HCT116 (cell line): ENCODE measurements at regions of chr7 and their contacts with region 1.

Region 1: GRCh38 chr7:144437370-144438191 is 34.1 kb upstream of the NOBOX start:
- DNase-seq: peak; percentile 65
- ATAC-seq: peak; percentile 91
- H3K4me3 ChIP-seq: no peak overlapping the region
- H3K27ac ChIP-seq: no peak overlapping the region
- H3K4me1 ChIP-seq: no peaks in the 10 kb centered on the region
- H3K27me3 ChIP-seq: no peaks in the 10 kb centered on the region
- CTCF ChIP-seq: peak; percentile 58 to 86 (median 77)
- POLR2A ChIP-seq: no peak
- RAD21 ChIP-seq: peak; percentile 87

Region 2: GRCh38 chr7:144174613-144175012 is 263.0 kb before region 1 on chr7:
- CTCF ChIA-PET with region 1: no interaction called
- POLR2A ChIA-PET with region 1: no interaction called
- RAD21 ChIA-PET with region 1: no interaction called
- intact Hi-C with region 1: loop called (anchors 5 kb)
- DNase-seq: no peak
- ATAC-seq: no peak
- H3K4me3 ChIP-seq: no peak overlapping the region
- H3K27ac ChIP-seq: no peak overlapping the region
- H3K4me1 ChIP-seq: no peaks in the 10 kb centered on the region
- H3K27me3 ChIP-seq: no peaks in the 10 kb centered on the region
- CTCF ChIP-seq: no peak
- POLR2A ChIP-seq: no peak
- RAD21 ChIP-seq: no peak

Region 3: GRCh38 chr7:144534196-144534595 is 96.6 kb after region 1 on chr7:
- CTCF ChIA-PET with region 1: no interaction called
- POLR2A ChIA-PET with region 1: no interaction called
- RAD21 ChIA-PET with region 1: no interaction called
- intact Hi-C with region 1: no loop called
- DNase-seq: no peak
- ATAC-seq: no peak
- H3K4me3 ChIP-seq: no peak overlapping the region
- H3K27ac ChIP-seq: no peak overlapping the region
- H3K4me1 ChIP-seq: no peaks in the 10 kb centered on the region
- H3K27me3 ChIP-seq: no peaks in the 10 kb centered on the region
- CTCF ChIP-seq: no peak
- POLR2A ChIP-seq: no peak
- RAD21 ChIP-seq: no peak